ENCODE measurements at regions of chr11 and their contacts with region 1.

Region 1: DNA sequence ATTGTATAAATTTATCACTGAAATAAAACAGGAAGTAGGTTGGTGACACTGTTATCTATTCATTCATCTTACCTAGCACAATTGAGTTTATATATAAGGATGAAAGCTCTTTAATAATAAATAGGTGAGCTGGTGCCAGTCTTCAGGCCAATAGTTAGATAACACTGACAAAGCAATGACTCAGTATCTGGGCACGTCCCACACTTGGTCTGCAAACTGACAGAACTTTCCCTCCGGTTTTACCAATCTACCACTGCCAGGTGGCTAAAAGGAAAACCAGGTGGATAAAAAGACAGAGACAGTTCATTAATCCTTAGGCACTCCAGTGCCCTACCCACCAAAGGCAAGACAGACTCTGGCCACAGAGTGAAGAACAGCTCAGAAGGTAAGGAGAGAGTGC is 17.6 kb downstream of the DDB1 start:
- DNase-seq: no peak
- ATAC-seq: no peak
- H3K4me3 ChIP-seq: no peak overlapping the region
- H3K4me3 Mint-ChIP-seq: no peak overlapping the region
- H3K27ac ChIP-seq: no peak overlapping the region
- H3K27ac Mint-ChIP-seq: no peak overlapping the region
- H3K4me1 ChIP-seq: no peaks in the 10 kb centered on the region
- H3K4me1 Mint-ChIP-seq: no peaks in the 10 kb centered on the region
- H3K27me3 ChIP-seq: no peaks in the 10 kb centered on the region
- H3K27me3 Mint-ChIP-seq: no peaks in the 10 kb centered on the region
- CTCF ChIP-seq: no peak

Region 2: GRCh38 chr11:61264795-61265194 is 50.5 kb before region 1 on chr11:
- CTCF ChIA-PET with region 1: no interaction called
- POLR2A ChIA-PET with region 1: interaction called, 11 read pairs
- intact Hi-C with region 1: no loop called
- DNase-seq: no peak
- ATAC-seq: no peak
- H3K4me3 ChIP-seq: no peak overlapping the region
- H3K4me3 Mint-ChIP-seq: no peak overlapping the region
- H3K27ac ChIP-seq: no peak overlapping the region
- H3K27ac Mint-ChIP-seq: no peak overlapping the region
- H3K4me1 ChIP-seq: no peaks in the 10 kb centered on the region
- H3K4me1 Mint-ChIP-seq: no peaks in the 10 kb centered on the region
- H3K27me3 ChIP-seq: no peaks in the 10 kb centered on the region
- H3K27me3 Mint-ChIP-seq: no peaks in the 10 kb centered on the region
- CTCF ChIP-seq: no peak

Region 3: GRCh38 chr11:61270354-61271076 is 44.7 kb before region 1 on chr11:
- CTCF ChIA-PET with region 1: no interaction called
- POLR2A ChIA-PET with region 1: no interaction called
- intact Hi-C with region 1: loop called (anchors 2 kb)
- DNase-seq: no peak
- ATAC-seq: no peak
- H3K4me3 ChIP-seq: no peak overlapping the region
- H3K4me3 Mint-ChIP-seq: no peak overlapping the region
- H3K27ac ChIP-seq: no peak overlapping the region
- H3K27ac Mint-ChIP-seq: no peak overlapping the region
- H3K4me1 ChIP-seq: no peaks in the 10 kb centered on the region
- H3K4me1 Mint-ChIP-seq: no peaks in the 10 kb centered on the region
- H3K27me3 ChIP-seq: no peaks in the 10 kb centered on the region
- H3K27me3 Mint-ChIP-seq: no peaks in the 10 kb centered on the region
- CTCF ChIP-seq: no peak

Region 4: GRCh38 chr11:61567286-61568061 is 252.2 kb after region 1 on chr11:
- CTCF ChIA-PET with region 1: no interaction called
- POLR2A ChIA-PET with region 1: no interaction called
- intact Hi-C with region 1: no loop called
- DNase-seq: peak; percentile 78
- ATAC-seq: peak; percentile 57
- H3K4me3 ChIP-seq: no peak overlapping the region
- H3K4me3 Mint-ChIP-seq: no peak overlapping the region
- H3K27ac ChIP-seq: no peak overlapping the region
- H3K27ac Mint-ChIP-seq: peak overlapping the region; percentile 32
- H3K4me1 ChIP-seq: no peaks in the 10 kb centered on the region
- H3K4me1 Mint-ChIP-seq: no peaks in the 10 kb centered on the region
- H3K27me3 ChIP-seq: peaks cover 0 to 59% (median 19%) of the 10 kb centered on the region in 4 experiments
- H3K27me3 Mint-ChIP-seq: peaks cover 60% of the 10 kb centered on the region
- CTCF ChIP-seq: no peak

Measured in B cell (primary cell).